ENCODE measurements at regions of chr10 and their contacts with region 1.

Region 1: GRCh38 chr10:101214446-101215396 is 14.5 kb downstream of the LBX1 start:
- DNase-seq: peak in 1 of 2 donors; percentile 46
- ATAC-seq: peak; percentile 53 to 77
- H3K4me3 ChIP-seq: peak overlapping the region in 3 of 4 donors; percentile 55 to 58 (median 56)
- H3K27ac ChIP-seq: no peak overlapping the region
- H3K4me1 ChIP-seq: peaks cover 9 to 10% of the 10 kb centered on the region in 2 donors
- H3K27me3 ChIP-seq: peaks cover 8 to 49% (median 19%) of the 10 kb centered on the region in 3 donors
- CTCF ChIP-seq: peak; percentile 87 to 95 (median 90)
- POLR2A ChIP-seq: no peak

Region 2: DNA sequence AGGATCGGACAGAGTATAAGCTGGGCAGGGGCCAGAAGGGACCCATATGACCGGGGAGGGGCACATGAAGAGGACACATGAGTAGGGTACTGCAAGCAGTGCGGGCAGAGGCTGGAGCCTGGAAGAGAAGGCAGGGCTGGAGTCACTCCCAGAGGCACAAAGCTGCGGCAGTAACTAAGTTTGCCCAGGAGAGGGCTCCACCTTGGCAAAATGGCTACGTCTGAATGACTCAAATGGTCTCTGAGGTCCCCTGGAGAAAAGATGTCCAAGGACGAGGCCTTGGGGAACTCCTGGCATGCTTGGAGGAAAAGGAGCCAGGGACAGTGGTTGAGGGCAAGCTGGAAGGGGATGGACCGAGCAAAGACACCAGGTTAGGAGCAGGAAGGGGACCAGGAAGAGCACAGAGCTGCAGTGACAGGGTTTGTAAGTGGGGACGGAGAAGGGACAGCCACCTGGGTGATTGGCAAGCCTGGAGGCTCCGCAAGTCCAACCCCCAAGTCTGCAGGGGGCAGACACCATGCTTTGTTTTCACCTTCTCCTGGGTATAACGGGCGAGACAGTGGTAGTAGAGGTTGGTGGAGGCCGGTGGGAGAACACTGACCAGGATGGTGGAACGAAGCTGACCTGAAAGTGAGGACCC is 57.6 kb after region 1 on chr10:
- in situ Hi-C with region 1: no loop called
- intact Hi-C with region 1: loop called (anchors 1 kb)
- DNase-seq: peak in 1 of 2 donors; percentile 48
- ATAC-seq: peak; percentile 73 to 92
- H3K4me3 ChIP-seq: no peak overlapping the region
- H3K27ac ChIP-seq: no peak overlapping the region
- H3K4me1 ChIP-seq: no peaks in the 10 kb centered on the region
- H3K27me3 ChIP-seq: no peaks in the 10 kb centered on the region
- CTCF ChIP-seq: peak; percentile 50 to 77 (median 71)
- POLR2A ChIP-seq: no peak

Region 3: DNA sequence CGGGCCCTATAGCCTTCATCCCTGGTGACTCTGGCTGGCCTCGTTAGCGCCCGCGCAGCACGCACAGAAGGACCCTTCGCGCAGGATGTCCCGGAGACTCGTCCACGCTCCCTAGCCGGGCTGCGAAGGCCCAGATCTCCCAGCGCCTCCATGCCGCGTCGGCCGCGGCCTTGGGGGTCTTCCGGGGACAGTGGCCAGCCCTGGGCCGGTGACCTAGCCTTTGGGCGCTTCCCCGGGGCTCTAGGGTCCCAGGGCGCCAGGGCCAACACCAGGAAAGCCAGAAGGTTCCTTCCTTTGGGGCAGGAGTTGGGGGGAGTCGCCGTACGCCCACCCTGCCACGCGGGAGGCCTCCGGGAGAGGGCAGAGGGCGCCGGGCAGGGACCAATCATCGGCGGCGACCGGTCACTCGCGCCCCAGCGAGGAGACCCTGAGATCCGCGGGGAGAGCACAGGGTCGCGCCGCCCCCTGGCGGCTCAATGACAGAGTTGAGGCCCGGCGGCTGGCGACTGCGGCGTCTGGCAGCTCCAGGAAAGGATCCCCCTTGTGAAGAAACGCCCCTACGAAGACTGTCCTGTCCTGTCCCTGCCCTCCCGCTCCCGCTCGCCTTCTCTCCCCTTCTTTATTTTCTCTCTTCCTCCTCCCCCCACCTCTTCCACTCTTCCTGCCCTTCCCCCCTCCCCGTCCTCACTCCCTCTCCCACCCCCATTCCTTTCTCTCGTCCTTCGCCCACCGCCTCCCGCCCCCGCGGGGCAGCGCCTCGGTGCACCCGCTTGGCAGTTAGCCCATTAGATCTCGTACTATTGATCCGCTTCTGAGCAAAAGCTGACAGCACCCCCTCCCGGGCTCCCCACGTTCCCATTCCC is 76.8 kb after region 1 on chr10:
- in situ Hi-C with region 1: loop called in 3 of 4 experiments (anchors 5 kb)
- intact Hi-C with region 1: loop called (anchors 1 kb)
- DNase-seq: peak; percentile 28 to 56
- ATAC-seq: peak; percentile 63 to 83
- H3K4me3 ChIP-seq: peak overlapping the region; percentile 71 to 95 (median 76)
- H3K27ac ChIP-seq: peak overlapping the region; percentile 76 to 84 (median 82)
- H3K4me1 ChIP-seq: peaks cover 0 to 5% of the 10 kb centered on the region in 2 donors
- H3K27me3 ChIP-seq: no peaks in the 10 kb centered on the region
- CTCF ChIP-seq: peak; percentile 60 to 91 (median 81)
- POLR2A ChIP-seq: no peak

Region 4: DNA sequence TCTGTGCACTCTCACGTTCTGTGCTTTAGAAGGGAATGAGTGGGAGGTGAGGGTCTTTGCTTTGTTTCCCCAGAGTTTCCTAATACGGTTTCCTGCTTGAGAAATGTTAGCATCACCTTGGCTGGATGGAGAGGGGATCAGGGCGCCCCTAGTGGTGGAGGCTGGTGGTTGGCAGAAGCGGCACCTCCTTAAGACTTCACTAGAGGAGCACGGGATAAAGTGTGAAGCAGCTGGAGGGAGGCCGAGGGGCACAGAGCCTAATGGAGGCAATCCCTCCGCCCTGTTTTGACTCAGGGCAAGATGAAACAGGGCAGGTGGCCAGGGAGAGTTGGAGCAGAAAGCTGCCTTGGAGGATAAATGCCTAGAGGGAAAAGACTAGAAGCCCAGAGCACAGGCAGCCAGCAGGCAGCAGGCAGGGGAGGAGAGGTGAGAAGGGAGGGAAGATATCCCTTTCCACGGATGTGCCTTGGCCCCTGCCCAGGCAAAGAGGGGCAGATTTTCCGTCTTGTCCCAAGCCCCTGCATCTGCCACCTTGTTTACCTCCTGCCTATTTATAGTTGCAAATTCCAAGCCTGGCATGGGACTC is 83.3 kb after region 1 on chr10:
- in situ Hi-C with region 1: loop called in 3 of 4 experiments (anchors 5 kb)
- intact Hi-C with region 1: no loop called
- DNase-seq: peak; percentile 38 to 55
- ATAC-seq: peak; percentile 72 to 85
- H3K4me3 ChIP-seq: no peak overlapping the region
- H3K27ac ChIP-seq: peak overlapping the region; percentile 36 to 83 (median 54)
- H3K4me1 ChIP-seq: peaks cover 4 to 20% of the 10 kb centered on the region in 2 donors
- H3K27me3 ChIP-seq: no peaks in the 10 kb centered on the region
- CTCF ChIP-seq: peak; percentile 55 to 94 (median 83)
- POLR2A ChIP-seq: no peak

Region 5: GRCh38 chr10:101441541-101442455 is 227.1 kb after region 1 on chr10:
- in situ Hi-C with region 1: loop called in 2 of 4 experiments (anchors 10 to 25 kb)
- intact Hi-C with region 1: loop called (anchors 2 kb)
- DNase-seq: peak in 1 of 2 donors; percentile 13
- ATAC-seq: peak; percentile 82 to 95
- H3K4me3 ChIP-seq: no peak overlapping the region
- H3K27ac ChIP-seq: no peak overlapping the region
- H3K4me1 ChIP-seq: peaks cover 17 to 18% of the 10 kb centered on the region in 2 donors
- H3K27me3 ChIP-seq: no peaks in the 10 kb centered on the region
- CTCF ChIP-seq: peak in 4 of 5 experiments; percentile 41 to 60 (median 56)
- POLR2A ChIP-seq: no peak

Region 6: DNA sequence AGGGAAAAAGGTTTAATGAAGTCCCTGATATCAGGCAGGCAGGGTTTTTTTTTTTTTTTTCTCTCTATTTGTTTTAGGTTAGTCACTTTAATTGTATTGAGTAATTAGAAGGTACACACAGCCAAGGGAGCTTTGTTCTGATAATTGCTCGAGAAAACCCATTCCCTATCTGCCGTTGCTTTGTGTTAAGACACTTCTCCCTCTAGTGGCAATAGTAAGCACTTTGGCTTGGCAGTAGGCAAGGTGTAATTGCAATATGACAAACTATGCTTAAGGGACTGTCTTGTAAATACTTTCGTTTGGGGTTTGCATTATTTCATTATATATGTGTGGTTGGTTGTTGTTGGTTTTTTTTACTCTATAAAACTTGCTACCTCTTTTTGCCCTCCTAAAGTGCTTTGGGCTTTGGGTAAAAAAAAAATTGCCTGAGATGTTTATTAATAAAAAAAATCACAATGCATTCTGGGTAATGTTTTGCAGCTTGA is 252.6 kb after region 1 on chr10:
- in situ Hi-C with region 1: loop called in 2 of 4 experiments (anchors 10 kb)
- intact Hi-C with region 1: loop called (anchors 2 kb)
- DNase-seq: peak in 1 of 2 donors; percentile 18
- ATAC-seq: peak; percentile 65 to 90
- H3K4me3 ChIP-seq: no peak overlapping the region
- H3K27ac ChIP-seq: no peak overlapping the region
- H3K4me1 ChIP-seq: peaks cover 7 to 8% of the 10 kb centered on the region in 2 donors
- H3K27me3 ChIP-seq: no peaks in the 10 kb centered on the region
- CTCF ChIP-seq: peak; percentile 58 to 83 (median 75)
- POLR2A ChIP-seq: no peak

Region 7: GRCh38 chr10:101569838-101570766 is 355.4 kb after region 1 on chr10:
- in situ Hi-C with region 1: loop called (anchors 5 to 10 kb)
- intact Hi-C with region 1: loop called (anchors 1 kb)
- DNase-seq: peak; percentile 45 to 50
- ATAC-seq: peak; percentile 84 to 87
- H3K4me3 ChIP-seq: peak overlapping the region; percentile 57 to 66 (median 62)
- H3K27ac ChIP-seq: no peak overlapping the region
- H3K4me1 ChIP-seq: peaks cover 11 to 18% of the 10 kb centered on the region in 2 donors
- H3K27me3 ChIP-seq: peaks cover 32 to 46% (median 37%) of the 10 kb centered on the region in 3 donors
- CTCF ChIP-seq: peak; percentile 25 to 98 (median 91)
- POLR2A ChIP-seq: no peak

Measured in gastrocnemius medialis (tissue), 4 donors.